ENCODE measurements at regions of chr12 and their contacts with region 1.

Region 1: DNA sequence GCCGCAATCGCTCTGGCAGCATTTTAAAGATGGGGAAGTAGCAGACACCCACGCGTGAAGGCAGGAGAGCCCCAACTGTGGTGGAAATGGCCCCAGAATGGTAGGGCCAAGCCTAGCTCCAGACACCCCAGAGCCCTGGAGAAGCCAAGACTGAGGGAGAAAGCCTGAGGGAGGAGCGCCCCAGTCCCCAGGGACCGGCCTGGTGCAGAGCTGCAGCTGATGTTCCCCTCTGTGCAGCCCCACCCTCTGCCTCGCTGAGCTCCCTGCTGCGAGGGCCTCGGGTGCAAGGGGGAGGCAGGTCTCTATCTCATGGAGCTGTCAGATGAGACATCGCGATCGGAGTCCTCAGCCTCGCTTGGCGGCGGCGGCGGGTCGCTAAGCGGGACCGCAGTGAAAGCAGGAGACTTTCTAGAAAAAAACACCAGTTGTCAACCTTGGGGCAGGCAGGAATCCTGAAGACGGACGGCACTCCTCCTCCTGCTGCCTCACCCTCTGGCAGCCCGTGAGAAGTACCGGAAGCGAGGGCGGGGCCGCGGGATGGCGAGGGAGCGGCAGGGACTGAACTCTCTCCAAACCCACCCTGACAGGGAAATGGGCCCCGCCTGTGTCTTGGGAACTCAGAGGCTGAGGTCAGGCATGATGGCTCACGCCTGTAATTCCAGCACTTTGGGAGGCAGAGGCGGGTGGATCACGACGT is 6.0 kb downstream of the GAPDH start:
- DNase-seq: peak; percentile 97
- H3K4me3 Mint-ChIP-seq: peak overlapping the region; percentile 63
- H3K27ac Mint-ChIP-seq: peak overlapping the region; percentile 90
- H3K4me1 Mint-ChIP-seq: peaks cover 32% of the 10 kb centered on the region
- H3K27me3 Mint-ChIP-seq: no peaks in the 10 kb centered on the region
- CTCF ChIP-seq: no peak

Region 2: GRCh38 chr12:6423267-6424007 is 116.9 kb before region 1 on chr12:
- CTCF ChIA-PET with region 1: interaction called, 99 read pairs
- POLR2A ChIA-PET with region 1: interaction called, 9 read pairs
- intact Hi-C with region 1: loop called (anchors 1 kb)
- DNase-seq: peak; percentile 96
- H3K4me3 Mint-ChIP-seq: no peak overlapping the region
- H3K27ac Mint-ChIP-seq: no peak overlapping the region
- H3K4me1 Mint-ChIP-seq: peaks cover 5% of the 10 kb centered on the region
- H3K27me3 Mint-ChIP-seq: no peaks in the 10 kb centered on the region
- CTCF ChIP-seq: peak; percentile 88

Region 3: GRCh38 chr12:6493497-6494257 is 46.7 kb before region 1 on chr12 and contains the start of gene NCAPD2:
- CTCF ChIA-PET with region 1: interaction called, 10 read pairs
- POLR2A ChIA-PET with region 1: interaction called, 74 read pairs
- intact Hi-C with region 1: loop called (anchors 2 kb)
- DNase-seq: peak; percentile 96
- H3K4me3 Mint-ChIP-seq: peak within 1 kb of the TSS; percentile 95
- H3K27ac Mint-ChIP-seq: peak within 1 kb of the TSS; percentile 98
- H3K4me1 Mint-ChIP-seq: peaks cover 21% of the 10 kb centered on the region
- H3K27me3 Mint-ChIP-seq: no peaks in the 10 kb centered on the region
- CTCF ChIP-seq: no peak
- total RNA-seq, gene NCAPD2: 31.9 and 52.0 TPM in 2 replicates

Region 4: GRCh38 chr12:6507102-6507998 is 33.0 kb before region 1 on chr12:
- CTCF ChIA-PET with region 1: interaction called, 20 read pairs
- POLR2A ChIA-PET with region 1: interaction called, 11 read pairs
- intact Hi-C with region 1: no loop called
- DNase-seq: peak; percentile 6
- H3K4me3 Mint-ChIP-seq: peak overlapping the region; percentile 43
- H3K27ac Mint-ChIP-seq: peak overlapping the region; percentile 95
- H3K4me1 Mint-ChIP-seq: peaks cover 8% of the 10 kb centered on the region
- H3K27me3 Mint-ChIP-seq: no peaks in the 10 kb centered on the region
- CTCF ChIP-seq: no peak

Region 5: GRCh38 chr12:6528887-6529235 is 11.5 kb before region 1 on chr12:
- CTCF ChIA-PET with region 1: interaction called, 20 read pairs
- POLR2A ChIA-PET with region 1: interaction called, 3 read pairs
- intact Hi-C with region 1: no loop called
- DNase-seq: no peak
- H3K4me3 Mint-ChIP-seq: no peak overlapping the region
- H3K27ac Mint-ChIP-seq: no peak overlapping the region
- H3K4me1 Mint-ChIP-seq: peaks cover 16% of the 10 kb centered on the region
- H3K27me3 Mint-ChIP-seq: no peaks in the 10 kb centered on the region
- CTCF ChIP-seq: no peak

Region 6: GRCh38 chr12:6554168-6555017 is 14.1 kb after region 1 on chr12:
- CTCF ChIA-PET with region 1: interaction called, 58 read pairs
- POLR2A ChIA-PET with region 1: interaction called, 16 read pairs
- intact Hi-C with region 1: no loop called
- DNase-seq: peak; percentile 66
- H3K4me3 Mint-ChIP-seq: no peak overlapping the region
- H3K27ac Mint-ChIP-seq: peak overlapping the region; percentile 54
- H3K4me1 Mint-ChIP-seq: peaks cover 30% of the 10 kb centered on the region
- H3K27me3 Mint-ChIP-seq: no peaks in the 10 kb centered on the region
- CTCF ChIP-seq: peak; percentile 48

Region 7: GRCh38 chr12:6563448-6564050 is 23.2 kb after region 1 on chr12:
- CTCF ChIA-PET with region 1: interaction called, 34 read pairs
- POLR2A ChIA-PET with region 1: interaction called, 25 read pairs
- intact Hi-C with region 1: no loop called
- DNase-seq: peak; percentile 61
- H3K4me3 Mint-ChIP-seq: no peak overlapping the region
- H3K27ac Mint-ChIP-seq: no peak overlapping the region
- H3K4me1 Mint-ChIP-seq: peaks cover 7% of the 10 kb centered on the region
- H3K27me3 Mint-ChIP-seq: no peaks in the 10 kb centered on the region
- CTCF ChIP-seq: peak; percentile 64

Region 8: GRCh38 chr12:6778574-6779550 is 238.5 kb after region 1 on chr12:
- CTCF ChIA-PET with region 1: no interaction called
- POLR2A ChIA-PET with region 1: no interaction called
- intact Hi-C with region 1: no loop called
- DNase-seq: peak; percentile 94
- H3K4me3 Mint-ChIP-seq: peak overlapping the region; percentile 65
- H3K27ac Mint-ChIP-seq: no peak overlapping the region
- H3K4me1 Mint-ChIP-seq: peaks cover 10% of the 10 kb centered on the region
- H3K27me3 Mint-ChIP-seq: no peaks in the 10 kb centered on the region
- CTCF ChIP-seq: peak; percentile 94

Region 9: GRCh38 chr12:6925540-6926279 is 385.4 kb after region 1 on chr12:
- CTCF ChIA-PET with region 1: no interaction called
- POLR2A ChIA-PET with region 1: no interaction called
- intact Hi-C with region 1: no loop called
- DNase-seq: peak; percentile 96
- H3K4me3 Mint-ChIP-seq: peak overlapping the region; percentile 80
- H3K27ac Mint-ChIP-seq: peak overlapping the region; percentile 92
- H3K4me1 Mint-ChIP-seq: peaks cover 63% of the 10 kb centered on the region
- H3K27me3 Mint-ChIP-seq: no peaks in the 10 kb centered on the region
- CTCF ChIP-seq: no peak

Region 10: DNA sequence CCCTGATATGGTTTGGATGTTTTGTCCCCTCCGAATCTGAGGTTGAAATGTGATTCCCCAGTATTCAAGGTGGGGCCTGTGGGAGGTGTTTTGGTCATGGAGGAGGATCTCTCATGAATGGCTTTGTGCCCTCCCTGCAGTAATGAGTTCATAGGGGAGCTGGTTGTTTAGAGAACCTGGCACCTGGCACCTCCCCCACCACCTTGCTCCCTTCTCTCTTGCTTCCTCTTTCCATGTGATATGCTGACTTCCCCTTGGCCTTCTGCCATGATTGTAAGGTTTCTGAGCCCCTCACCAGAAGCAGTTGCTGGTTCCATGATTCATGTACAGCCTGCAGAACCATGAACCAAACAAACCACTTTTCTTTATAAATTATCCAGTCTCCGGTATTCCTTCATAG is 871.0 kb after region 1 on chr12:
- CTCF ChIA-PET with region 1: no interaction called
- POLR2A ChIA-PET with region 1: no interaction called
- intact Hi-C with region 1: no loop called
- DNase-seq: no peak
- H3K4me3 Mint-ChIP-seq: no peak overlapping the region
- H3K27ac Mint-ChIP-seq: no peak overlapping the region
- H3K4me1 Mint-ChIP-seq: no peaks in the 10 kb centered on the region
- H3K27me3 Mint-ChIP-seq: peaks cover 9% of the 10 kb centered on the region
- CTCF ChIP-seq: no peak